ENCODE measurements at regions of chr2 and their contacts with region 1.

Region 1: GRCh38 chr2:12931186-12931844 is 214.6 kb downstream of the TRIB2 start:
- DNase-seq: peak; percentile 59
- H3K4me3 ChIP-seq: no peak overlapping the region
- H3K27ac ChIP-seq: no peak overlapping the region
- H3K4me1 ChIP-seq: peaks cover 9% of the 10 kb centered on the region
- H3K27me3 ChIP-seq: no peaks in the 10 kb centered on the region
- CTCF ChIP-seq: peak; percentile 74 to 78
- POLR2A ChIP-seq: no peak

Region 2: DNA sequence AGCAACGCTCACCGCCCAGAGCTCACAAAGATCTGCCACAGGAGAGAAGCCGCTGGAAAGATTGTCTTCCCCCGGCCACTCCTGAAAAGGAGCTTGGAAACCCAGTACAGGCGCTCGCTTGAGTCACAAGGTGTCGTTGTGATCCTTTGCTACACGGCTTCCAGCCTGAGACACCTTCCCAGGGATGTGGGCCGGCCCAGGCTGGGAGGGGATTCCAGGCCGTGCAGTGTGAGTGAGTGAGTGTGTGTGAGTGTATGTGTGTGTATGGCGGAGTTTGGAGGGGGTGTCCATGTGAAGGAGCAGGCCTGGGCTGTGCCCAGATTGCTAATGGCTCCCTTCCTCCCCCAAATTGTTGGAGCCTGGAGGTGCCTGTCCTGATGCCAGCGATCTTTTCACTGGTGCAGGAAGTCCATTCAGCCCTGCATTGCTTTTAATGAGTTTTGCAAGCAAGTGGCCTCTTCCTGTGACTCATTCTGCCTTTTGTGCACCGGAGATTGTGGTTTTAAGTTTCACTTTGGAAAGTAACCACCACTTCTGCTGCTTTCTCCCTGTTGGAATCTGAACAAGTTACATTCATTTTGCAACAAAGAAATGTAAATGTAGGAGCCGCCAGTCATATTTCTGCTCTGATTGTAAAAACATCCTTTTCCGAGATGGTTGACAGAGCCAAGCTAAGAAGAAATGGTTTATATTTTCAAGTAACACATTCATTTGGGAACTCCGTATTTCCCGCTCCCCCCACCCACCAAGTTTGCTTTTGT is 1101.2 kb before region 1 on chr2:
- CTCF ChIA-PET with region 1: interaction called, 17 read pairs
- POLR2A ChIA-PET with region 1: no interaction called
- dilution Hi-C with region 1: no loop called
- intact Hi-C with region 1: loop called (anchors 1 kb)
- DNase-seq: peak; percentile 96
- H3K4me3 ChIP-seq: peak overlapping the region; percentile 13 to 47 (median 17)
- H3K27ac ChIP-seq: peak overlapping the region; percentile 73
- H3K4me1 ChIP-seq: peaks cover 30% of the 10 kb centered on the region
- H3K27me3 ChIP-seq: no peaks in the 10 kb centered on the region
- CTCF ChIP-seq: peak; percentile 27 to 43
- POLR2A ChIP-seq: no peak

Region 3: DNA sequence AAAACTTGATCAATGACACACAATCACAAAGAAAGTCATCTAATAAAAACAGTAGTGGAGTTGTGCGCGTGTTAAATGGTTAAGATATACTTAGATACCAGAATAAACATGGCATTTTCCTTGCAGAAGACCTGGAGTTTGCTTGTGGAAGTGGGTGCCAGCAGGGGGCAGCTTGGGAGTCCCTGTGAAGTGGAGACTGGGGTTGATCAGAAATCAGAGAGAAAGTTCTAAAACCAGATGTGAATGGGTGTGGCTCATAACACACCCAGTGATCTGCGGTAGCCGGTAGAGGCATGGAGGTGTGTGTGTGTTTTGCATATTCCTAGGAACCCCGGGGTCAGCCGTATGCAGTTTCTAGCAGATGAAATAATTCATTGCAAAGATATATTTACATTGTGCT is 514.7 kb before region 1 on chr2:
- CTCF ChIA-PET with region 1: interaction called, 8 read pairs
- POLR2A ChIA-PET with region 1: no interaction called
- dilution Hi-C with region 1: no loop called
- intact Hi-C with region 1: loop called (anchors 1 kb)
- DNase-seq: peak; percentile 57
- H3K4me3 ChIP-seq: no peak overlapping the region
- H3K27ac ChIP-seq: no peak overlapping the region
- H3K4me1 ChIP-seq: peaks cover 3% of the 10 kb centered on the region
- H3K27me3 ChIP-seq: no peaks in the 10 kb centered on the region
- CTCF ChIP-seq: peak; percentile 47 to 62
- POLR2A ChIP-seq: no peak

Region 4: DNA sequence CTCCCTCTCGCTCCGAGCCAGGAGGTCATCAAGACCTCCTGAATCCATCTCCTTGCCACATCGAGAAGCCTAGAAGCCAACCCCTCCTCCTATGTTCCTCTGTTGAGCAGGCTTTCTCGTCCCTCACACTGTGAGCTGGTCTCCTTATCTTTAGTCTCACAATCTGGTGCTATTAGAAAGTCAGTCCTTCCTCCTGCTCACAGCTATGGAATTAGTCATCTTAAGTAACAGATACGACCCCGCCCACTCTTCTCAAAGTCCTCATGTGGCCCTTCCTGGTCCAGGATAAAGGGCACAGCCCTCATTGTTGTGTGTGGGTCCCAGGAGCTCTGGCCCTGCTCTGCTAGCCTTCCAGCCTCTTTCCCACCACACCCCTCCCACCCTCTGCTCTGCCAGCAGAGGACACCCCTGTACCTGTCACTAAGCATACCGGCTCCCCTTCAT is 255.9 kb before region 1 on chr2:
- CTCF ChIA-PET with region 1: interaction called, 3 read pairs
- POLR2A ChIA-PET with region 1: no interaction called
- dilution Hi-C with region 1: no loop called
- intact Hi-C with region 1: loop called (anchors 2 kb)
- DNase-seq: peak; percentile 69
- H3K4me3 ChIP-seq: no peak overlapping the region
- H3K27ac ChIP-seq: peak overlapping the region; percentile 81
- H3K4me1 ChIP-seq: peaks cover 33% of the 10 kb centered on the region
- H3K27me3 ChIP-seq: no peaks in the 10 kb centered on the region
- CTCF ChIP-seq: no peak
- POLR2A ChIP-seq: no peak

Region 5: GRCh38 chr2:12797815-12798214 is 133.5 kb before region 1 on chr2:
- CTCF ChIA-PET with region 1: interaction called, 13 read pairs
- POLR2A ChIA-PET with region 1: no interaction called
- dilution Hi-C with region 1: no loop called
- intact Hi-C with region 1: no loop called
- DNase-seq: peak; percentile 92
- H3K4me3 ChIP-seq: no peak overlapping the region
- H3K27ac ChIP-seq: peak overlapping the region; percentile 85
- H3K4me1 ChIP-seq: peaks cover 24% of the 10 kb centered on the region
- H3K27me3 ChIP-seq: no peaks in the 10 kb centered on the region
- CTCF ChIP-seq: no peak
- POLR2A ChIP-seq: no peak

Region 6: GRCh38 chr2:12948961-12949353 is 17.6 kb after region 1 on chr2:
- CTCF ChIA-PET with region 1: interaction called, 24 read pairs
- POLR2A ChIA-PET with region 1: no interaction called
- dilution Hi-C with region 1: no loop called
- intact Hi-C with region 1: no loop called
- DNase-seq: no peak
- H3K4me3 ChIP-seq: no peak overlapping the region
- H3K27ac ChIP-seq: no peak overlapping the region
- H3K4me1 ChIP-seq: peaks cover 17% of the 10 kb centered on the region
- H3K27me3 ChIP-seq: no peaks in the 10 kb centered on the region
- CTCF ChIP-seq: no peak
- POLR2A ChIP-seq: no peak

Measured in endothelial cell of umbilical vein (primary cell).